Naive thymus-derived CD4-positive, alpha-beta T cell (primary cell): ENCODE measurements at regions of chr1 and their contacts with region 1.

Region 1: DNA sequence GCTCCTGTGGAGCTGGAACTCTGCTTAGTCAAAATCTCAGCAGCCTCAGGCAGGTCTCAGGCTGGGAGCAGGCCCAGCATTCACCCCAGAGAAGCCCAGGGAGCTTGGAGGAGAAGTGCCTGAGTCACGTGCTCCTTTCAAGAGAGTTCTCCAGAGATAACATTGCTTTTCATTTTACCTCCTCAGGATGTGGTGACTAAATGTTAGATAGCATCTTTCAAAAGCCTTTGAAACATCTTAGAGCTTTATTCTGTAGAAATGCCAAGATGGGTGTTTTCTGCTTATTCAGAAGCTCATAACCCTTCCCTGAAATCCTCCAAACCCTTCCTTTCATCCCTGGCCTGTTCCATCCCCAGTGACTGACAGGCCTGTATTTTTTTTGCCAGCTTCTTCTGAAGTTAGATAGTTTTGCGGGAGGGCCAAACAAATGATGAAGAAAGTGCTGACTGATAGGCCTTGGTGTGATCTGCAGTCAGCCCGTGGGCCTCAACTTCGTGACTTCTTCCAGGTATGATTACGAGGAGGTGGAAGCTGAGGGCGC is 58.0 kb downstream of the PGM1 start:
- DNase-seq: peak in 8 of 9 donors; percentile 31 to 74 (median 60)
- ATAC-seq: peak; percentile 93
- H3K4me3 ChIP-seq: peak overlapping the region; percentile 1
- H3K4me3 Mint-ChIP-seq: peak overlapping the region; percentile 59 to 86 (median 74)
- H3K27ac ChIP-seq: peak overlapping the region; percentile 30
- H3K27ac Mint-ChIP-seq: peak overlapping the region; percentile 78 to 97 (median 94)
- H3K4me1 ChIP-seq: peaks cover 20 to 27% of the 10 kb centered on the region in 2 donors
- H3K4me1 Mint-ChIP-seq: peaks cover 18 to 50% (median 35%) of the 10 kb centered on the region in 7 donors
- H3K27me3 ChIP-seq: no peaks in the 10 kb centered on the region
- H3K27me3 Mint-ChIP-seq: no peaks in the 10 kb centered on the region

Region 2: GRCh38 chr1:63522891-63523728 is 128.1 kb before region 1 on chr1 and contains the starts of genes EFCAB7 and ITGB3BP:
- CTCF ChIA-PET with region 1: no interaction called
- POLR2A ChIA-PET with region 1: no interaction called
- intact Hi-C with region 1: loop called in 1 of 2 experiments (anchors 2 kb)
- DNase-seq: peak; percentile 73 to 86 (median 82)
- ATAC-seq: peak; percentile 92
- H3K4me3 ChIP-seq: peak within 1 kb of the TSS; percentile 83
- H3K4me3 Mint-ChIP-seq: peak within 1 kb of the TSS; percentile 82 to 100 (median 98)
- H3K27ac ChIP-seq: peak within 1 kb of the TSS; percentile 78
- H3K27ac Mint-ChIP-seq: peak within 1 kb of the TSS; percentile 93 to 99 (median 97)
- H3K4me1 ChIP-seq: peaks cover 7 to 13% of the 10 kb centered on the region in 2 donors
- H3K4me1 Mint-ChIP-seq: peaks cover 12 to 47% (median 36%) of the 10 kb centered on the region in 7 donors
- H3K27me3 ChIP-seq: no peaks in the 10 kb centered on the region
- H3K27me3 Mint-ChIP-seq: peaks cover 0 to 2% (median 0%) of the 10 kb centered on the region in 5 donors
- total RNA-seq, gene EFCAB7: 4.1 to 13.5 (median 9.2) TPM
- total RNA-seq, gene ITGB3BP: 16.5 to 52.6 (median 32.9) TPM

Region 3: GRCh38 chr1:63615768-63616420 is 35.3 kb before region 1 on chr1:
- CTCF ChIA-PET with region 1: interaction called, 4 read pairs
- POLR2A ChIA-PET with region 1: no interaction called
- intact Hi-C with region 1: loop called in 1 of 2 experiments (anchors 1 kb)
- DNase-seq: peak; percentile 7 to 81 (median 62)
- ATAC-seq: peak; percentile 88
- H3K4me3 ChIP-seq: no peak overlapping the region
- H3K4me3 Mint-ChIP-seq: no peak overlapping the region
- H3K27ac ChIP-seq: no peak overlapping the region
- H3K27ac Mint-ChIP-seq: no peak overlapping the region
- H3K4me1 ChIP-seq: no peaks in the 10 kb centered on the region
- H3K4me1 Mint-ChIP-seq: peaks cover 0 to 15% (median 5%) of the 10 kb centered on the region in 7 donors
- H3K27me3 ChIP-seq: no peaks in the 10 kb centered on the region
- H3K27me3 Mint-ChIP-seq: no peaks in the 10 kb centered on the region

Region 4: GRCh38 chr1:63691701-63692425 is 40.6 kb after region 1 on chr1:
- CTCF ChIA-PET with region 1: interaction called, 8 read pairs
- POLR2A ChIA-PET with region 1: interaction called, 5 read pairs
- intact Hi-C with region 1: loop called (anchors 1 kb)
- DNase-seq: peak in 7 of 9 donors; percentile 4 to 47 (median 41)
- ATAC-seq: peak; percentile 49
- H3K4me3 ChIP-seq: no peak overlapping the region
- H3K4me3 Mint-ChIP-seq: no peak overlapping the region
- H3K27ac ChIP-seq: no peak overlapping the region
- H3K27ac Mint-ChIP-seq: no peak overlapping the region
- H3K4me1 ChIP-seq: no peaks in the 10 kb centered on the region
- H3K4me1 Mint-ChIP-seq: peaks cover 0 to 8% (median 6%) of the 10 kb centered on the region in 7 donors
- H3K27me3 ChIP-seq: no peaks in the 10 kb centered on the region
- H3K27me3 Mint-ChIP-seq: peaks cover 0 to 18% (median under 1%) of the 10 kb centered on the region in 5 donors

Region 5: GRCh38 chr1:64823691-64824476 is 1172.7 kb after region 1 on chr1:
- CTCF ChIA-PET with region 1: no interaction called
- POLR2A ChIA-PET with region 1: no interaction called
- intact Hi-C with region 1: loop called in 1 of 2 experiments (anchors 10 kb)
- DNase-seq: peak in 8 of 9 donors; percentile 38 to 74 (median 64)
- ATAC-seq: peak; percentile 80
- H3K4me3 ChIP-seq: no peak overlapping the region
- H3K4me3 Mint-ChIP-seq: peak overlapping the region in 3 of 10 donors; percentile 30 to 44 (median 44)
- H3K27ac ChIP-seq: no peak overlapping the region
- H3K27ac Mint-ChIP-seq: peak overlapping the region in 7 of 9 donors; percentile 5 to 77 (median 39)
- H3K4me1 ChIP-seq: peaks cover 5 to 17% of the 10 kb centered on the region in 2 donors
- H3K4me1 Mint-ChIP-seq: peaks cover 13 to 31% (median 26%) of the 10 kb centered on the region in 7 donors
- H3K27me3 ChIP-seq: no peaks in the 10 kb centered on the region
- H3K27me3 Mint-ChIP-seq: peaks cover 0 to 2% (median 0%) of the 10 kb centered on the region in 5 donors